ENCODE measurements at regions of chr12 and their contacts with region 1.

Region 1: DNA sequence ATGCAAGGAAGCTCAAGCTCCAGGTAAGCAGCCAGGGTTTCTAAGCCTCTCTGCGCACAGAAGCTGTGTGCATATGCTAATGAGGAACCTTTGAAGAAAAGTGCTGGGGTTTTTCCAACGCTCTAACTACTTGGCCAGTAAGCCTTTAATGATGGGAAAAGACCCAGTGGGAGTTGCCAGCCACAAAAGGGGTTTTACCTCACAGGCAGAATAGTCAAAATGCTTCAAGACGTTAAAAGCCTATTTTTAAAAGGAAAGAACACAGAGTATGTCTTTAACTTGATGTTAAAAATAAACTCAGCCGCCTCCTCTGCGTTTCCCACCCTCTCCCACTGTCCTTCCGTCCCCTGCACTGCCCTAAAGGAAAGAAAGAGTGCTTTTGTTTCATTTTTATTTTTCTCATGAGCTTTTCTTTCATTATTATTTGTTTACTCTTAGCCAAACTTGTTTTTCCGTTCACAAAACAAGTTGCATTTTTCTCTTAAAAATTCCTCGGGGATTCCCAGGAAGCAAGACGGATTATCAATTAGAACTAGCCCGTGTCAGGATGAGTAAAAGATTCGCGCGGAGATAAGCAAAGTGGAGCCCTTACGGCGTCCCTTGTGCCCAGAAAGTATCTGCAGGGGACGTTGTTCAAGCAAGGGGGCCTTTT is 209.8 kb upstream of the NUDT4 start:
- DNase-seq: peak; percentile 67
- H3K4me3 Mint-ChIP-seq: peak overlapping the region; percentile 61
- H3K27ac Mint-ChIP-seq: no peak overlapping the region
- H3K4me1 Mint-ChIP-seq: peaks cover 15% of the 10 kb centered on the region
- H3K27me3 Mint-ChIP-seq: peaks cover 10% of the 10 kb centered on the region

Region 2: GRCh38 chr12:93146263-93146939 is 21.6 kb before region 1 on chr12:
- CTCF ChIA-PET with region 1: no interaction called
- POLR2A ChIA-PET with region 1: no interaction called
- intact Hi-C with region 1: no loop called
- DNase-seq: no peak
- H3K4me3 Mint-ChIP-seq: no peak overlapping the region
- H3K27ac Mint-ChIP-seq: no peak overlapping the region
- H3K4me1 Mint-ChIP-seq: no peaks in the 10 kb centered on the region
- H3K27me3 Mint-ChIP-seq: peaks cover 4% of the 10 kb centered on the region

Region 3: GRCh38 chr12:93223440-93224426 is 55.8 kb after region 1 on chr12:
- CTCF ChIA-PET with region 1: no interaction called
- POLR2A ChIA-PET with region 1: no interaction called
- intact Hi-C with region 1: no loop called
- DNase-seq: no peak
- H3K4me3 Mint-ChIP-seq: no peak overlapping the region
- H3K27ac Mint-ChIP-seq: no peak overlapping the region
- H3K4me1 Mint-ChIP-seq: no peaks in the 10 kb centered on the region
- H3K27me3 Mint-ChIP-seq: peaks cover 2% of the 10 kb centered on the region

Region 4: DNA sequence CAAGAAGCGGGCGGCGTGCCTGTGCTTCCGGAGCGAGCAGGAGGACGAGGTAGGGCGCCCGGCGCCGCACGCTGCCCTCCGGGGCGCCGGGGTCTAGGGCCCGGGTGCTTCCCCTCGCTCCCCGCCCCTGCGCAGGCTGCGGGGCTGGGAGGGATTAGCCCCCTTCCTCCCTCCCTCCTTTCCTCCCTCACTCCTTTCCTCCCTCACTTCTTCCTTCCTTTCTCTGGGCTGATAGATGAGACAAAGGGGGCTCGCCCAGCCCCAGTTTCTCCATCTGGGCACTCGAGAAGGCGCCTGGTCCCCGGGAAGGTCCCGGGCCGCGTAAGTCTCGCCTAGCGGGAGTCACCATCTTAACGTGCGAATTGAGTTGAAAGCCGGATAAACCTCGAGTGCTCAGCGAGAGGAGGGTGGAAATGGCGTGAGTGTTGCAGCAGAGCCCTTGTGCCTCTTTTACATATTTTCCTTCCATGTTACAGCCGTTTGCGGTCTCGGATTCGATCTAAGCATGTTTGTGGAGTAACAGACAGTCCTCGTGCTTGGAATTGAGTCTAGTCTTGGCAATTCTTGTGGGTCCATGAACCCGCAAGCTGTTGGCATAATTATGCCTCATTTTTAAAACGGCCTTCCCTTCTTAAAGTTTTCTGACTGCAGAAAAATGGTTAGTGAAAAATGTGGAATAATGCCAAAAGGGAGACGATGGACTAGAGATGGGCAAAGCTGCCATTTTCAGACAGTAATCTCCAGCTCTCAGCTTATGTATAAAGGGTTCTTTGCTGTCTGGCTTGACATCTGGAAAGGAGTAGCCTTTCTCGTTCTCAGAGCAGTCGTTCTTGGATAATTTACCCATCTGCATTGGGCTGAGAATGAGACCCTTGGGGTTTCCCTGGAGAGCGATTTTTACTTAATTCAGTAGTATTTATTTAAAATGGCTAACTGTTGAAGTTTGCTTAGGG is 210.7 kb after region 1 on chr12:
- CTCF ChIA-PET with region 1: no interaction called
- POLR2A ChIA-PET with region 1: no interaction called
- intact Hi-C with region 1: loop called (anchors 5 kb)
- DNase-seq: peak; percentile 74
- H3K4me3 Mint-ChIP-seq: peak overlapping the region; percentile 99
- H3K27ac Mint-ChIP-seq: peak overlapping the region; percentile 99
- H3K4me1 Mint-ChIP-seq: peaks cover 40% of the 10 kb centered on the region
- H3K27me3 Mint-ChIP-seq: no peaks in the 10 kb centered on the region